ENCODE measurements at regions of chr6 and their contacts with region 1.

Region 1: GRCh38 chr6:26156076-26156849 is 69.0 kb downstream of the HFE start:
- DNase-seq: peak; percentile 94
- H3K4me3 ChIP-seq: peak overlapping the region; percentile 70 to 91 (median 80)
- H3K27ac ChIP-seq: peak overlapping the region; percentile 97 to 100 (median 100)
- H3K4me1 ChIP-seq: peaks cover 0 to 36% (median 14%) of the 10 kb centered on the region in 4 donors
- H3K27me3 ChIP-seq: no peaks in the 10 kb centered on the region
- CTCF ChIP-seq: no peak
- EP300 ChIP-seq: peak; percentile 71
- POLR2A ChIP-seq: peak; percentile 100

Region 2: GRCh38 chr6:26122793-26123674 is 33.2 kb before region 1 on chr6:
- in situ Hi-C with region 1: loop called in 1 of 4 experiments (anchors 5 kb)
- intact Hi-C with region 1: loop called (anchors 5 kb)
- DNase-seq: peak; percentile 97
- H3K4me3 ChIP-seq: peak overlapping the region; percentile 59 to 84 (median 70)
- H3K27ac ChIP-seq: peak overlapping the region; percentile 93 to 99 (median 98)
- H3K4me1 ChIP-seq: peaks cover 6 to 21% (median 20%) of the 10 kb centered on the region in 4 donors
- H3K27me3 ChIP-seq: no peaks in the 10 kb centered on the region
- CTCF ChIP-seq: peak in 1 of 5 experiments; percentile 15
- EP300 ChIP-seq: peak; percentile 97
- POLR2A ChIP-seq: peak; percentile 89

Region 3: GRCh38 chr6:26183581-26184366 is 27.5 kb after region 1 on chr6:
- in situ Hi-C with region 1: no loop called
- intact Hi-C with region 1: no loop called
- DNase-seq: peak; percentile 68
- H3K4me3 ChIP-seq: peak overlapping the region; percentile 15 to 58 (median 44)
- H3K27ac ChIP-seq: peak overlapping the region; percentile 86 to 93 (median 90)
- H3K4me1 ChIP-seq: peaks cover 0 to 28% (median 11%) of the 10 kb centered on the region in 4 donors
- H3K27me3 ChIP-seq: no peaks in the 10 kb centered on the region
- CTCF ChIP-seq: no peak
- EP300 ChIP-seq: no peak
- POLR2A ChIP-seq: peak; percentile 93

Region 4: DNA sequence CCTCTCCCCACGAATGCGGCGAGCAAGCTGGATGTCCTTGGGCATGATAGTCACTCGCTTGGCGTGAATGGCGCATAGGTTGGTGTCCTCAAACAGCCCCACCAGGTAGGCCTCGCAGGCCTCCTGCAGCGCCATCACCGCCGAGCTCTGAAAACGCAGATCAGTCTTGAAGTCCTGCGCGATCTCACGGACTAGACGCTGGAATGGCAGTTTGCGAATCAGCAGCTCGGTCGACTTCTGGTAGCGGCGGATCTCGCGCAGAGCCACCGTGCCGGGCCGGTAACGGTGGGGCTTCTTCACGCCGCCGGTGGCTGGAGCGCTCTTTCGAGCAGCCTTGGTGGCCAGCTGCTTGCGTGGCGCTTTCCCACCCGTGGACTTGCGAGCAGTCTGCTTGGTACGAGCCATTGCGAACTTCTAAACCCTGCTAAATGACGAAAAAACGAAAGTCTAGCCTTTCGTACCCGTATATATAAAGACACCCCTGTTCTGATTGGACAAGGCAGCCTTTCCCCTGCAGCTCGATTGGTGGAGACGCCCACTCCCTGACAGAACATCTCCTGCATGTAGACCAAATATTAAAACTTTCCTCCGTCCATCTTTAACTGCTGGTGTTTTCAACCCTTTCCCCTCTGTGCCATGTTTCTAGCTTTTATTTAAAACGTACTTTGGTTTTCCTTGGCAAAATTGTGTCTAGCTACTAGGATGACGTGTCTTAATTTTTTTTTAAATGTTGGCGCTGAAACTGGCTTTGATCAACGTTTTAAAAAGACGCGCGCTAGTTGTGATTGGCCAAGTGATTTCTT is 40.8 kb after region 1 on chr6:
- in situ Hi-C with region 1: loop called in 1 of 4 experiments (anchors 5 kb)
- intact Hi-C with region 1: loop called (anchors 5 kb)
- DNase-seq: peak; percentile 84
- H3K4me3 ChIP-seq: peak overlapping the region; percentile 46 to 70 (median 62)
- H3K27ac ChIP-seq: peak overlapping the region; percentile 97 to 99 (median 98)
- H3K4me1 ChIP-seq: peaks cover 5 to 29% (median 20%) of the 10 kb centered on the region in 4 donors
- H3K27me3 ChIP-seq: no peaks in the 10 kb centered on the region
- CTCF ChIP-seq: no peak
- EP300 ChIP-seq: no peak
- POLR2A ChIP-seq: peak; percentile 91

Region 5: GRCh38 chr6:27141529-27142015 is 985.3 kb after region 1 on chr6:
- in situ Hi-C with region 1: loop called in 1 of 4 experiments (anchors 25 kb)
- intact Hi-C with region 1: loop called (anchors 2 kb)
- DNase-seq: no peak
- H3K4me3 ChIP-seq: no peak overlapping the region
- H3K27ac ChIP-seq: no peak overlapping the region
- H3K4me1 ChIP-seq: peaks cover 9 to 56% (median 18%) of the 10 kb centered on the region in 4 donors
- H3K27me3 ChIP-seq: no peaks in the 10 kb centered on the region
- CTCF ChIP-seq: no peak
- EP300 ChIP-seq: no peak
- POLR2A ChIP-seq: no peak

Measured in transverse colon (tissue), 4 donors.